ENCODE measurements at regions of chr18 and their contacts with region 1.

Region 1: DNA sequence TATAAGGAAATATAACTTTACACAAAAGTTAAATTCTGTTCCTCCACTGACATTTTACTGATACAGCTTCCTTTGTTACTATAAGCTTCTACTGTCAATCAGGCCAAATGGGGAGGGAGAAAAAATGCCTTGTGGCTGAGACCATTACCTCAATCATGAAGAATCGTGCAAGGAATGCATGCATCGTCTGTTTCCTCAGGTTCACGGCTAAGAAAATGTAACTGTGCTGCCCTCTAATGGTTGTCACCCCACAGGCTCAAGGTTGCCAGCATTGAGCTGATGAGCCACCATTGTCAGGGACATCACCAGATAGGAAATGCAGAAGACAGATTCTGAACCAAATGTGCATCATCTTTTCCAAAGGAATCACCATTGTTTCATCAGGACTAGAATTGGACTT is 426.9 kb downstream of the CDH2 start:
- DNase-seq: peak; percentile 74
- H3K4me3 Mint-ChIP-seq: no peak overlapping the region
- H3K27ac Mint-ChIP-seq: no peak overlapping the region
- H3K4me1 Mint-ChIP-seq: no peaks in the 10 kb centered on the region
- H3K27me3 Mint-ChIP-seq: no peaks in the 10 kb centered on the region
- CTCF ChIP-seq: peak; percentile 69

Region 2: GRCh38 chr18:27605107-27605834 is 144.7 kb before region 1 on chr18:
- CTCF ChIA-PET with region 1: interaction called, 102 read pairs
- intact Hi-C with region 1: loop called (anchors 1 kb)
- DNase-seq: peak; percentile 67
- H3K4me3 Mint-ChIP-seq: no peak overlapping the region
- H3K27ac Mint-ChIP-seq: peak overlapping the region; percentile 60
- H3K4me1 Mint-ChIP-seq: peaks cover 14% of the 10 kb centered on the region
- H3K27me3 Mint-ChIP-seq: no peaks in the 10 kb centered on the region
- CTCF ChIP-seq: peak; percentile 83

Region 3: DNA sequence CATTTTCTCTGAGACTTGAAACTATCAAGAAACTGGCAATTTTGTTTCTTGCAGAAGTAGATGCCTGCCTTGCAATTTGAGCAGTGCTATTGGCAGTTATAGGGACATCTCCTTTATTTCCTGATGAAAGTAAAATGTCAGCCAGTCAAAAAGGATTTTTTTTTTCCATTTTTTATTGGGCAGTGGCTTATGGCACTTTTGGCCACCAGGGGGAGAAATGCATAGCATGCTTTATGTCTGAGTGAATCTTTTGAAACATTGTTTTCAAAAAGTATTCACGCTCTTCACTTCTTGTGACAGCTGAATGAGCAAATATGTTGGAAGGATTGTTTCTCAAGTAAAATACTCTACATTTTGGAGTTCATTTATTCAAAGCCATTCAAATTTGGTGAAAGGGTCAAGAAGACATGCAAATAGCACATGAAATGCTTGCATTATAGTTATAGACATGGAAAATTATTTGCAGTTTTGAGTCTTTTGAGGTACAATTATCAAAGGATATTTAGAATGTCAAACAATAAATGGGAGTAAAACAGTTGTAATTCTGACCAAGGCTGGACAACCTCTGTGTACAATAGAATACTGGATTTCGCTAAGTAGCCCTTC is 64.1 kb before region 1 on chr18:
- CTCF ChIA-PET with region 1: interaction called, 6 read pairs
- intact Hi-C with region 1: loop called (anchors 5 kb)
- DNase-seq: peak; percentile 48
- H3K4me3 Mint-ChIP-seq: no peak overlapping the region
- H3K27ac Mint-ChIP-seq: no peak overlapping the region
- H3K4me1 Mint-ChIP-seq: no peaks in the 10 kb centered on the region
- H3K27me3 Mint-ChIP-seq: no peaks in the 10 kb centered on the region
- CTCF ChIP-seq: peak; percentile 70

Region 4: DNA sequence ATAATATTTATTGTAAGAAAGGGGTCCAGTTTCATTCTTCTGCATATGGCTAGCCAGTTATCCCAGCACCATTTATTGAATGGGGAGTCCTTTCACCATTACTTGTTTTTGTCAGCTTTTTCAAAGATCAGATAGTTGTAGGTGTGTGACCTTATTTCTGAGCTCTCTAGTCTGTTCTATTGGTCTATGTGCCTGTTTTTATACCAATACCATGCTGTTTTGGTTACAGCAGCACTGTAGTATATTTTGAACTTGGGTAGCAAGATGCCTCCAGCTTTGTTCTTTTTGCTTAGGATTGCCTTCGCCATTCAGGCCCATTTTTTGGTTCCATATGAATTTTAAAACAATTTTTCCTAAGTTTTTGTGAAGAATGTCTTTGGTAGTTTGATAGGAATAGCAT is 106.8 kb after region 1 on chr18:
- CTCF ChIA-PET with region 1: no interaction called
- intact Hi-C with region 1: no loop called
- DNase-seq: no peak
- H3K4me3 Mint-ChIP-seq: no peak overlapping the region
- H3K27ac Mint-ChIP-seq: no peak overlapping the region
- H3K4me1 Mint-ChIP-seq: no peaks in the 10 kb centered on the region
- H3K27me3 Mint-ChIP-seq: no peaks in the 10 kb centered on the region
- CTCF ChIP-seq: no peak

Region 5: GRCh38 chr18:28095041-28095440 is 345.0 kb after region 1 on chr18:
- CTCF ChIA-PET with region 1: no interaction called
- intact Hi-C with region 1: no loop called
- DNase-seq: no peak
- H3K4me3 Mint-ChIP-seq: no peak overlapping the region
- H3K27ac Mint-ChIP-seq: no peak overlapping the region
- H3K4me1 Mint-ChIP-seq: peaks cover 9% of the 10 kb centered on the region
- H3K27me3 Mint-ChIP-seq: no peaks in the 10 kb centered on the region
- CTCF ChIP-seq: no peak

Measured in Calu3 (cell line).